MCF 10A (cell line): ENCODE measurements at regions of chr18 and their contacts with region 1.

Region 1: GRCh38 chr18:24413148-24413547 is 13.3 kb upstream of the IMPACT start:
- DNase-seq: peak; percentile 36
- H3K4me3 Mint-ChIP-seq: no peak overlapping the region
- H3K27ac Mint-ChIP-seq: no peak overlapping the region
- H3K4me1 Mint-ChIP-seq: peaks cover 9% of the 10 kb centered on the region
- H3K27me3 Mint-ChIP-seq: no peaks in the 10 kb centered on the region
- CTCF ChIP-seq: peak; percentile 33

Region 2: DNA sequence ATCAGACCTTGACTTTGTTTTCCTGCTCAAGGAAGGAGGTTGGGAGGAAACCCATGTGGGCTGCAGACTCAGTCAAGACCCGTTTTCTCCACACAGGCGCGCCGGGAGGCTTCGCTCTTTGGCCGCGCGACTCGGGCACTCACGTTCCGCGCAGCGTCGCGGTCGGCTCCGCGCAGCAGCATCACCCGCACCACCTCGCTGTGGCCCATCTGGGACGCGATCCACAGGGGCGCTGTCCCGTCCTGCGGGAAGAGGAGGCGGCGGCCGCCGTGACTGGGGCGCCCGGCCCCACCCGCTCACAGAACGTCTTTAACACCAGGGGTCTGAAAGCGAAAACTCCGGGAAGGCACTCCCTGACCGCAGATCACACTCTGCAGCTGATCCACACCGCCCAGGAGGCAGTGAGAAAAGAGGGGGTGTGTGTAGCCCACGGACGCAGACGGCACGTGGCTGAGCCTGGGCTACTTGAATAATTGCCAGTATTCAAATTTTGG is 793.7 kb before region 1 on chr18:
- CTCF ChIA-PET with region 1: no interaction called
- POLR2A ChIA-PET with region 1: no interaction called
- intact Hi-C with region 1: no loop called
- DNase-seq: no peak
- H3K4me3 Mint-ChIP-seq: no peak overlapping the region
- H3K27ac Mint-ChIP-seq: no peak overlapping the region
- H3K4me1 Mint-ChIP-seq: peaks cover 6% of the 10 kb centered on the region
- H3K27me3 Mint-ChIP-seq: peaks cover 12% of the 10 kb centered on the region
- CTCF ChIP-seq: no peak

Region 3: DNA sequence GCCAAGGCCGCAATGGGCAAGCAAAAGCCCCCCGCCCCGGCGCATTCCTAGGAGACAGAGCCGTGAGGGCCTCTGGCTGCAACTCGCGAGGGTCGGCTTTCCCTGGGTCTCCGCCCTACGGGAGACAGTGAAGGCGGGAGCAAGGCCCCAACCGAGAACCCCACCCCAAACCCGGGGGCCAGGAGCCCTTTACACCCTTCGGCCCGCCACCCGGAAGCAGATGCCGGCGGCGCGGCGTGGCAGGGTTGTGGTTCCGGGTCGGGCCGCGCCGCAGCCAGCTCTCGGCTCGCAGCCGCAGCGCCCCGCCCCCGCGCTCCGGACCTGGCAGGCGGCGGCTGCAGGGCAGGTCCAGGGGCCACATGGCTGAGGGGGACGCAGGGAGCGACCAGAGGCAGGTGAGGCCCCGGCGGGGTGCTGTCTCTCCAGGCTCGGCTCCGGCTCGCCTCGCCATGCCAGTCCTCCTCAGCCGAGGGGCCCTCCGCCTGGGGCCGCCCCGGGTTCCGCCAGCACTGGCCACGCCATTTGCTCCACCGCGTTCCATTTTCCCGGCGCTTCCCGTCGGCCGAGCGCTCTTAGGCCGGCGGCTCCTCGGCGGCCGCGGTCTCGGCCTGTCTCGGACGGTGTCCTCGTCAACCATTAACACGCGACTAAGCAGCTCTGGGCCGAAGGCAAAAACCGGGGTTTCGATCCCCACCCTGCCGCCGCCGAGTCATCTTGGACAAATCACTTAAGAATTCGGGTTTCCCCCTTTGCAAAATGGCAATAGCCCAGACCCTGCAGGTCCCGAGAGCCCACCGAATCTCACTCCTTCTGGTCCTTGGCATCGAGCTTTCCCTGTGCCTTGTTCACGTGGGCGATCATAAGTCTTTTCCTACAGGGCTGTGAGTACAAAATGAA is 13.5 kb after region 1 on chr18 and contains the start of gene IMPACT:
- CTCF ChIA-PET with region 1: interaction called, 12 read pairs
- POLR2A ChIA-PET with region 1: interaction called, 4 read pairs
- intact Hi-C with region 1: no loop called
- DNase-seq: peak; percentile 82
- H3K4me3 Mint-ChIP-seq: peak within 1 kb of the TSS; percentile 92
- H3K27ac Mint-ChIP-seq: peak within 1 kb of the TSS; percentile 94
- H3K4me1 Mint-ChIP-seq: peaks cover 6% of the 10 kb centered on the region
- H3K27me3 Mint-ChIP-seq: no peaks in the 10 kb centered on the region
- CTCF ChIP-seq: no peak
- total RNA-seq, gene IMPACT: 88.3 and 97.2 TPM in 2 replicates